Aorta (tissue), 5 donors: ENCODE measurements at regions of chr3 and their contacts with region 1.

Region 1: GRCh38 chr3:40179016-40179415 is 130.5 kb upstream of the EIF1B start:
- DNase-seq: peak; percentile 71 to 92
- ATAC-seq: peak; percentile 70
- H3K4me3 ChIP-seq: no peak overlapping the region
- H3K27ac ChIP-seq: no peak overlapping the region
- H3K4me1 ChIP-seq: no peaks in the 10 kb centered on the region
- H3K27me3 ChIP-seq: peaks cover 0 to 1% of the 10 kb centered on the region in 2 donors

Region 2: DNA sequence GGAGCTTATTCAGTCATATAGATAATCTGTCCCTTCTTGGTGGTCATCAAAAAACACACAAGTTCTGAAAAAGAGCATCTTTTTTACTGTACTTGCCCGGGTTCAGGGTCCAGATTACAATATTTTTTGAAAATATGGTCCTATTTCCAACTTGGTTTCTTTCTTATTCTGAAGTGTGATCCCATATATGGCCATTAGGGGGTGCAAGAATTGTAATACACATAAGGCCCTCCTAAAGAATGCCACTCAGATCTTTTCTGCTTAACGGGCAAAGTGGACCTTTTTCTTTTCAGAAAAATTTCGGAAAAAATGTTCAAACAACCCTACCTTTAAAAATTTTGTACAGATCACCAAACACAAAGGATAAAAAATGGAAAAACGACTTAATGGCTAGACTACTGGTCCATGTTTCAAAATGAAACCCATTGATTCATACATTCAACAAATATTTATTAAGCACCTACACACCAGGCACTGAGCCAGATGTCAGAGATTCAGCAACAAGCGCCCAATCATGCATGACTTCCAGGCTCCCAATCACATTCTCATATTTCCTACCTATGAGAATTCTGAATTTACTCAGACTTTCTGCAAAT is 471.6 kb before region 1 on chr3:
- intact Hi-C with region 1: loop called (anchors 2 to 5 kb)
- DNase-seq: no peak
- ATAC-seq: no peak
- H3K4me3 ChIP-seq: no peak overlapping the region
- H3K27ac ChIP-seq: no peak overlapping the region
- H3K4me1 ChIP-seq: no peaks in the 10 kb centered on the region
- H3K27me3 ChIP-seq: no peaks in the 10 kb centered on the region

Region 3: GRCh38 chr3:39724233-39724846 is 454.7 kb before region 1 on chr3:
- intact Hi-C with region 1: loop called in 1 of 2 experiments (anchors 5 kb)
- DNase-seq: no peak
- ATAC-seq: no peak
- H3K4me3 ChIP-seq: no peak overlapping the region
- H3K27ac ChIP-seq: no peak overlapping the region
- H3K4me1 ChIP-seq: no peaks in the 10 kb centered on the region
- H3K27me3 ChIP-seq: no peaks in the 10 kb centered on the region

Region 4: DNA sequence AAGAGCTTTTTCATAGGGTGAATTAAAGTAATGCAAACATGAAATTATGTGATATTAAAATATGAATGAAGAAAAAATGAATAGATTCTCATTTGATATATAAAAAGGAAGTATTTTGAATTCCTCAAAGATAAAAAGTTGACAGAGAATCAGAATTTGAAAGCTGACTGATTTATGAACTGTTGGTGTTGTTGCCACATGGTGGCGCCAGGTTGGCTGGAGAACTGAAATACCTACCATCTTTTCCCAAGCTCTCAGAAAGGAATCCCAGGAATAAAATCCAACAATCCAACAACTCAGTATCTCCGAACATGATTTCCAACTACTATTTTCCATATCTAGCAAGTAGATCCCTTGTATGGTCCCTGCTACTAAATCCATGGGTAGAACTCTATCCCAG is 366.5 kb before region 1 on chr3:
- intact Hi-C with region 1: loop called in 1 of 2 experiments (anchors 5 kb)
- DNase-seq: no peak
- ATAC-seq: no peak
- H3K4me3 ChIP-seq: no peak overlapping the region
- H3K27ac ChIP-seq: no peak overlapping the region
- H3K4me1 ChIP-seq: no peaks in the 10 kb centered on the region
- H3K27me3 ChIP-seq: no peaks in the 10 kb centered on the region

Region 5: DNA sequence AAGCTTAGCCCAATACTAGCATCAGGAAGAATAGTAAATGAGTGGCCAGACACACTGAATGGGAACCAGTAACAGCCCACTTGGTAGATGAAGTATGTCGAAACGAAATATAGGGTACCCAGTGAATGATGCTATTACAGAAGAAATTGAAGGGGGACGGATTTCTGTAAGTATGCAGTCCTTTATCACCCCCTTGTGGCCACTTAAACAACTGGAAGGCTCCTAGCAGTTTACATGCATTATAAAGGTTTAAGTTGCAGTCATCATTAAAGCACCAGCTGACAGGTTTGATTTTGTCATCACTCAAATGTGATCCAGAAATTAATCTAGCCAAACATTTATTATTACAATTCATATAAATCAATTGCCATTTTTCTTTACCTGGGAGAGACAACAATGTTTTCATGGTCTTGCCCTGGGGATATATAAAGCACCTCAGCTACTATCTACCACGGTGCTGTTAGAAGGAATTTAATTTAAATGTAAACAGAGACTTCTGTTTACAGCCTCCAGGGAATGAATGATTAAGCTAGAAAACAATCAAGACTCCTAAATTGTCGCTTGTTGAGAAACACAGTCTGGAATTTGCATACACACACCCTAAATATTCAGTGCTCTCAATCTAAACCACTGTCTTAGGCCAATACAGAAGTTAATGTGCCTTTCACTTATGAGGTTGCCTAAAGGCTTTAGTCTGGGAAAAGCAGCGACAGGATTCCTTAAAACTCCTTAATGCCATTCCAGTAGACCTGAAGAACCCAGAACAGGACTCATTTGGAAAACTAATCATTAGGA is 138.2 kb after region 1 on chr3:
- intact Hi-C with region 1: no loop called
- DNase-seq: no peak
- ATAC-seq: no peak
- H3K4me3 ChIP-seq: no peak overlapping the region
- H3K27ac ChIP-seq: no peak overlapping the region
- H3K4me1 ChIP-seq: no peaks in the 10 kb centered on the region
- H3K27me3 ChIP-seq: no peaks in the 10 kb centered on the region